ENCODE measurements at regions of chr13 and their contacts with region 1.

Region 1: GRCh38 chr13:73708393-73708985 is 425.7 kb downstream of the KLF12 start:
- DNase-seq: peak in 3 of 10 donors; percentile 44 to 51 (median 47)

Region 2: GRCh38 chr13:72808917-72809500 is 899.5 kb before region 1 on chr13:
- intact Hi-C with region 1: loop called (anchors 2 kb)
- DNase-seq: no peak

Region 3: DNA sequence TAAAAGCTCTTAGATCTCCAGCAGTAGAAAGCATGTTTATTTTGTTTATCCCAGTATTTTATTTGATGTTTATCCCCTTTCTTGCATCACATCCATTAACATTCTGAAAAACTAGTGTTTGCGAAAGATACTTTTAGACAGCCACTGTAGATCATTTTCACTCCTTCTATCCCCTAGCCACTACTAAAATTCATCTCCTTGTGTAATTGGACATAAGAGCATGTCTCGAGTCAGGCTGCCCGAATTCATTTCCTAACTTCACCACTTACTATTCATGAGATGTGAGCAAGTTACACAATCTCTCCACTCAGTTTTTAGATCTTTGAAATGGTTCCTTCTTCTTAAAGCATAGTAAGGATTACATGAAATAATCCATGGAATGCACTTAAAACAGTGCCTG is 135.7 kb before region 1 on chr13:
- intact Hi-C with region 1: no loop called
- DNase-seq: no peak